ENCODE measurements at regions of chr11 and their contacts with region 1.

Region 1: GRCh38 chr11:116772443-116773202 is at the start of gene BUD13:
- DNase-seq: peak; percentile 89 to 98 (median 93)
- ATAC-seq: peak; percentile 97
- H3K4me3 ChIP-seq: peak within 1 kb of the TSS; percentile 94
- H3K4me3 Mint-ChIP-seq: peak within 1 kb of the TSS; percentile 86 to 99 (median 96)
- H3K27ac ChIP-seq: peak within 1 kb of the TSS; percentile 93
- H3K27ac Mint-ChIP-seq: peak within 1 kb of the TSS; percentile 92 to 99 (median 97)
- H3K4me1 ChIP-seq: peaks cover 19 to 20% of the 10 kb centered on the region in 2 donors
- H3K4me1 Mint-ChIP-seq: peaks cover 25 to 53% (median 44%) of the 10 kb centered on the region in 7 donors
- H3K27me3 ChIP-seq: no peaks in the 10 kb centered on the region
- H3K27me3 Mint-ChIP-seq: no peaks in the 10 kb centered on the region
- total RNA-seq, gene BUD13: 10.3 to 32.0 (median 20.3) TPM

Region 2: DNA sequence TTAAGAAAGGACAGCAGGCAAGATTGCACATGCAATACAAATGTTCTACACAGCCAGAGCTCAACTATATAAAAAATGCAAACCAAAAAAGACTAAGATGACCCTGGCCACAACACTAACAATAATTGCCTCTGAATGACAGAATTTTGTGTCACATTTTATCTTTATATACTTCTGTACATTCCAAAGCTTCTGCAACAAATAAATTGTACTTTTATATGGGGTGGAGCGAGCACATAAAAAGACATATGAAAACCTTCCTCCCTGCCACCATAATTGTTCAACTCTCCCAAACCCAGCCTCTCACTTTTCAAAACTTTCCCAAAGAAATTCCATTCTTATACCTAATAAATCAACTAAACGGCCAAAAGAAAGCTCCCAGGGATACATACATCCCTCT is 10.5 kb before region 1 on chr11:
- CTCF ChIA-PET with region 1: no interaction called
- POLR2A ChIA-PET with region 1: interaction called, 10 read pairs
- intact Hi-C with region 1: no loop called
- DNase-seq: no peak
- ATAC-seq: no peak
- H3K4me3 ChIP-seq: no peak overlapping the region
- H3K4me3 Mint-ChIP-seq: no peak overlapping the region
- H3K27ac ChIP-seq: no peak overlapping the region
- H3K27ac Mint-ChIP-seq: no peak overlapping the region
- H3K4me1 ChIP-seq: no peaks in the 10 kb centered on the region
- H3K4me1 Mint-ChIP-seq: peaks cover 8 to 15% (median 11%) of the 10 kb centered on the region in 7 donors
- H3K27me3 ChIP-seq: no peaks in the 10 kb centered on the region
- H3K27me3 Mint-ChIP-seq: no peaks in the 10 kb centered on the region

Region 3: DNA sequence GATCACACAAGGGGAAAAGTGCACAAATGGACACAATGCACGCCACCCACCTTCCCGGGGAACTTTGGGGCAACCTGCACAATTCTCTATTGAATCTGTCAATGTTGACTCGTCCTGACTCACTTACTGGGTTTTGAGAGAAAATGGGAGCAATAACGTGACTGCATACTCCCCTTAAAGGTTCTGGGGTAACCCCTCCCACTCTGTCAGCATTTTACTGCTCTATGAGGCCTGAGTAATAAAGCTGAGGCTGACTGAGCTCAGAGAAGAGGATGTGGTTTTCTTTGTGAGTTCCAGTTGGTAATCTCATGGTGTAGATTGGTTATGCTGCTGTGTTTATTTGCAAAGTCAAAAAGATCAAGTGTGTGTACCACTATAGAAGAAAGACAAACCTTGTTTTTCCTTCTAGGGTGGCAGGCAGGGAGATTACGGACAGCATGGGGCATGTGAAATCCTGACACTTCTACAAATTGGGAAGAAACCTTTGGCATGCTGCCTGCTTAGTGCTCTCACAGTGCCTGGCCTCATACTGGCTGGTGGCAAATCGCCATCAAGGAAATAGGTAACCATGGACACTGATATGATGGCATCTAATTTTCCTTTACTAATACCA is 80.9 kb after region 1 on chr11:
- CTCF ChIA-PET with region 1: no interaction called
- POLR2A ChIA-PET with region 1: interaction called, 8 read pairs
- intact Hi-C with region 1: loop called (anchors 1 to 5 kb)
- DNase-seq: peak in 8 of 9 donors; percentile 53 to 84 (median 77)
- ATAC-seq: peak; percentile 98
- H3K4me3 ChIP-seq: peak overlapping the region; percentile 38
- H3K4me3 Mint-ChIP-seq: peak overlapping the region; percentile 47 to 84 (median 70)
- H3K27ac ChIP-seq: peak overlapping the region; percentile 4
- H3K27ac Mint-ChIP-seq: peak overlapping the region; percentile 41 to 92 (median 81)
- H3K4me1 ChIP-seq: peaks cover 57 to 70% of the 10 kb centered on the region in 2 donors
- H3K4me1 Mint-ChIP-seq: peaks cover 52 to 78% (median 76%) of the 10 kb centered on the region in 7 donors
- H3K27me3 ChIP-seq: no peaks in the 10 kb centered on the region
- H3K27me3 Mint-ChIP-seq: no peaks in the 10 kb centered on the region

Region 4: GRCh38 chr11:117178210-117179034 is 405.8 kb after region 1 on chr11 and contains the start of gene SIDT2:
- CTCF ChIA-PET with region 1: no interaction called
- POLR2A ChIA-PET with region 1: interaction called, 3 read pairs
- intact Hi-C with region 1: loop called (anchors 1 to 2 kb)
- DNase-seq: peak; percentile 75 to 89 (median 87)
- ATAC-seq: peak; percentile 94
- H3K4me3 ChIP-seq: peak within 1 kb of the TSS; percentile 87
- H3K4me3 Mint-ChIP-seq: peak within 1 kb of the TSS; percentile 92 to 98 (median 94)
- H3K27ac ChIP-seq: peak within 1 kb of the TSS; percentile 85
- H3K27ac Mint-ChIP-seq: peak within 1 kb of the TSS; percentile 88 to 98 (median 96)
- H3K4me1 ChIP-seq: peaks cover 12 to 26% of the 10 kb centered on the region in 2 donors
- H3K4me1 Mint-ChIP-seq: peaks cover 26 to 42% (median 32%) of the 10 kb centered on the region in 7 donors
- H3K27me3 ChIP-seq: no peaks in the 10 kb centered on the region
- H3K27me3 Mint-ChIP-seq: no peaks in the 10 kb centered on the region
- total RNA-seq, gene SIDT2: 31.7 to 187 (median 60.5) TPM

Region 5: DNA sequence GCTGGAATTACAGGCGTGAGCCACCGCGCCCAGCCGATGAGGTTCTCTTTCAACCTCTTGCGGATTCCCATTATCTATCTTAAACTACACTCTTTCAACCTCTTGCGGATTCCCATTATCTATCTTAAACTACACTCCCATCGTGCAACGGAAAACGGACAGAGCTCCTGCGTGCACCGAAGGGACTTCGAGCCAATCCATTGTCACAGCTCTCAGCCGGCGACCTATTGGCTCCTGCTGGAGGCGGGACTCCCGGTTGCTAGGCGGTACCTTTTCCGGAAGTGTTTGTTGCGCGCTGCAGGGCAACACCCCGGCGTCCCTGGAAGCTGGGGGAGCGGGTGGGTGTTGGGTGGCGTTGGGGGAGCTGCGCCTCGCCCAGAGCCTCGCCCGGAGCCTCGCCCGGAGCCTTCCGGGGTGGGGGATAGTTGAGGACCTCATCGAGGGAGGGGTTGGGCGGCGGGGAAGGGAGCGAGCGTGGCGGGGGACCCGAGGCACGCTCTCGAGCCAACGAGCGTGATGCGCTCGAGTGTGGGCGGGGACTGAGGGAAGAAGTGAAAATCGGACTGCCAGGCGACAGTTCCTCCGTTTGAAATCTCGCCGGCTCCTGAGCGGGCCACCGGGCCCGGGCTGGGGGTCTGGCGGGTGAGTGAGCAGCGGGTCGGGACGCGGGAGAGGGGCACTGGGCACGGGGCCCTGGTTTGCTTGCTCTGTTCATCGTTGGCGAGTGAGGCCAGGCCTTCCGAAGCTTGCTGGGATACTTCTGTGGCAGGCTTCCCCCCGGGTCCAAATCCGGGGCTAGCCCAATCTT is 555.1 kb after region 1 on chr11 and contains the start of gene CEP164:
- CTCF ChIA-PET with region 1: no interaction called
- POLR2A ChIA-PET with region 1: no interaction called
- intact Hi-C with region 1: loop called (anchors 5 kb)
- DNase-seq: peak; percentile 76 to 95 (median 93)
- ATAC-seq: peak; percentile 96
- H3K4me3 ChIP-seq: peak within 1 kb of the TSS; percentile 66
- H3K4me3 Mint-ChIP-seq: peak within 1 kb of the TSS in 8 of 10 donors; percentile 26 to 69 (median 44)
- H3K27ac ChIP-seq: peak within 1 kb of the TSS; percentile 79
- H3K27ac Mint-ChIP-seq: peak within 1 kb of the TSS in 4 of 9 donors; percentile 11 to 81 (median 68)
- H3K4me1 ChIP-seq: peaks cover 0 to 10% of the 10 kb centered on the region in 2 donors
- H3K4me1 Mint-ChIP-seq: peaks cover 0 to 19% (median 14%) of the 10 kb centered on the region in 7 donors
- H3K27me3 ChIP-seq: no peaks in the 10 kb centered on the region
- H3K27me3 Mint-ChIP-seq: peaks cover 0 to 4% (median 0%) of the 10 kb centered on the region in 5 donors
- total RNA-seq, gene CEP164: 36.6 to 47.6 (median 36.8) TPM